IMR-90 (cell line): ENCODE measurements at regions of chr7 and their contacts with region 1.

Region 1: DNA sequence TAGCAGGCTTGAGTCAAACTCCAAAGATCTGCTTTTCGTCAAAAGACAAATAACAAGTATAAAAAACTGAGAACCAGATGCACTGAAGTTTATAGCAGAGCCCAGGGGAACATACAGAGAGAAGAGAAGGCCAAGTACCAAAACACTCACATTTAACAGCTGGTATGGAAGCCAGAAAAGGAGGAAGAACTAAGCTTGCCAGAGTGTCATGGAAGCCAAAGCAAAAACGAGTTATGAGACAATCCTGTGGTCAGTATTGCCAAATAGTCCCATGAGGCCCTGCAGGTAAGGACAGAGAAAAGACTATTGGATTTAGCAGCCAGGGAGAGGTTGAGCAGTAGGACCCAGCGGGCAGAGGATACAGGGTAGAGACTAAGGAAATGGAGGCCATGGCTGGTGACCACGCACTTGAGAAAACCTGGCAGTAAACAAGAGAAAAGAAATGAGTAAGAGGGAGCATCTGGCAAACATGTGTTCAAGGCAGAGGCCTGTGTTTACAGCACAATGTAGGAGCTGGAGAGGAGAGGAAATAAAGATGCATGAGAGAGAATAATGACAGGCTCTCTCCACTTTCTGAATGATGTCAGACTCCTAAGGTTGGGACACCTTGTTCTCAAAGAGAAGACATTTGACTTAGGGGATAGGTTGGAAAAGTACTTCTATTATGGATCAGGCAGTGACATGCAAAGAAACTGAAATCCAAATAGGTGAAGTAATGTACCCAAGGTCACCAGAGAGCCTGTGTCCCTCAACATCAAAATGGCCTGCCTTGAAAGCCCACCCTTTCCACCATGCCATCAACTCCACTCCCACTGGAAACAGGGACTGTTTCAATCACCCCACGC is 9.1 kb downstream of the CREB3L2 start:
- DNase-seq: peak; percentile 97
- ATAC-seq: peak; percentile 65
- H3K4me3 ChIP-seq: no peak overlapping the region
- H3K27ac ChIP-seq: peak overlapping the region; percentile 52
- H3K4me1 ChIP-seq: peaks cover 25% of the 10 kb centered on the region
- H3K27me3 ChIP-seq: no peaks in the 10 kb centered on the region
- CTCF ChIP-seq: no peak
- POLR2A ChIP-seq: peak; percentile 21
- RAD21 ChIP-seq: no peak

Region 2: DNA sequence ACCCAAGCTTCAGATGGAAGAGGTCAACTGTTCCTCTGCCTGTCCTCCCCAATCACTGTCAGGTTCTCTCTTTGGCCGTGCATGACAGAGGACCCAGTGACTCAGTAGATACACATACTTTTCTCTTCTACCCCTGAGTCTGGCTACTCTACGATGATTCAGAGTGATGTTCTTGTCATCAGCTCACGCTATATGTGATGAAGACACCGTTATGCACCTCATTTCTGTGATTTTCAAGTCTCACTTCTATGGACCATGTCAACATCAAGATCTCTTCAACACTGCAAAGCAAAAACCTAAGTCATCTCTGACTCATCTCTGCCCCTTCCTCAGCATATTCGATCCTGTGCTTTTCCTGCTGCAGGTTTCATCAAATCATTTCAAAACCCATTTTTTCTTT is 69.4 kb before region 1 on chr7:
- CTCF ChIA-PET with region 1: interaction called, 3 read pairs
- POLR2A ChIA-PET with region 1: no interaction called
- dilution Hi-C with region 1: loop called (anchors 10 kb)
- in situ Hi-C with region 1: no loop called
- intact Hi-C with region 1: no loop called
- DNase-seq: peak; percentile 93
- ATAC-seq: peak; percentile 65
- H3K4me3 ChIP-seq: no peak overlapping the region
- H3K27ac ChIP-seq: no peak overlapping the region
- H3K4me1 ChIP-seq: peaks cover 12% of the 10 kb centered on the region
- H3K27me3 ChIP-seq: no peaks in the 10 kb centered on the region
- CTCF ChIP-seq: no peak
- POLR2A ChIP-seq: no peak
- RAD21 ChIP-seq: peak; percentile 5

Region 3: DNA sequence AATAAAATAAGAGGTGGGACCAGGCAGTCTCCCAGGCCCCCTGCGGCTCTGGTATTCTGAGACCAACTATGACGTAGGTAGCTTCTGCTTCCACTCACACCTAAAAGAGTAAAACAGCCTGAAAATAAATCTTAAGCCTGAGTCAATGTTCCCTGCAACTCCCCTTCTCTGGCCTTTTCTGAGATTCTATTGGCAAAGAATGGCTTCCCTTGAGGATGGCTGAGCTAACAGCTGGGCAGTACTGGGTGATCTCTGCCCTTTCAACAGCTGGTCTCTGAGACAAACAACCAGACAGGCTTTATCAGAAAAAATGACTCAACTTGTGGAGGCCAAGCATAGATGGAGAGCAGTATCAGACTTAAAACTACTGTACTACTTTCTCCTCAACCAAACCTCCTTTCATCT is 49.6 kb before region 1 on chr7:
- CTCF ChIA-PET with region 1: no interaction called
- POLR2A ChIA-PET with region 1: no interaction called
- dilution Hi-C with region 1: no loop called
- in situ Hi-C with region 1: loop called (anchors 5 kb)
- intact Hi-C with region 1: loop called (anchors 5 kb)
- DNase-seq: peak; percentile 98
- ATAC-seq: peak; percentile 80
- H3K4me3 ChIP-seq: no peak overlapping the region
- H3K27ac ChIP-seq: peak overlapping the region; percentile 48; the same call in 1 of the 2 replicates
- H3K4me1 ChIP-seq: peaks cover 29% of the 10 kb centered on the region
- H3K27me3 ChIP-seq: no peaks in the 10 kb centered on the region
- CTCF ChIP-seq: no peak
- POLR2A ChIP-seq: no peak; the same call in 1 of the 2 replicates
- RAD21 ChIP-seq: peak; percentile 9; the same call in 1 of the 2 replicates

Region 4: GRCh38 chr7:137953665-137954470 is 38.9 kb before region 1 on chr7:
- CTCF ChIA-PET with region 1: interaction called, 3 read pairs
- POLR2A ChIA-PET with region 1: no interaction called
- dilution Hi-C with region 1: no loop called
- in situ Hi-C with region 1: no loop called
- intact Hi-C with region 1: loop called (anchors 1 kb)
- DNase-seq: peak; percentile 84
- ATAC-seq: peak; percentile 38
- H3K4me3 ChIP-seq: no peak overlapping the region
- H3K27ac ChIP-seq: no peak overlapping the region
- H3K4me1 ChIP-seq: peaks cover 24% of the 10 kb centered on the region
- H3K27me3 ChIP-seq: no peaks in the 10 kb centered on the region
- CTCF ChIP-seq: no peak
- POLR2A ChIP-seq: peak; percentile 67; the same call in 1 of the 2 replicates
- RAD21 ChIP-seq: no peak

Region 5: DNA sequence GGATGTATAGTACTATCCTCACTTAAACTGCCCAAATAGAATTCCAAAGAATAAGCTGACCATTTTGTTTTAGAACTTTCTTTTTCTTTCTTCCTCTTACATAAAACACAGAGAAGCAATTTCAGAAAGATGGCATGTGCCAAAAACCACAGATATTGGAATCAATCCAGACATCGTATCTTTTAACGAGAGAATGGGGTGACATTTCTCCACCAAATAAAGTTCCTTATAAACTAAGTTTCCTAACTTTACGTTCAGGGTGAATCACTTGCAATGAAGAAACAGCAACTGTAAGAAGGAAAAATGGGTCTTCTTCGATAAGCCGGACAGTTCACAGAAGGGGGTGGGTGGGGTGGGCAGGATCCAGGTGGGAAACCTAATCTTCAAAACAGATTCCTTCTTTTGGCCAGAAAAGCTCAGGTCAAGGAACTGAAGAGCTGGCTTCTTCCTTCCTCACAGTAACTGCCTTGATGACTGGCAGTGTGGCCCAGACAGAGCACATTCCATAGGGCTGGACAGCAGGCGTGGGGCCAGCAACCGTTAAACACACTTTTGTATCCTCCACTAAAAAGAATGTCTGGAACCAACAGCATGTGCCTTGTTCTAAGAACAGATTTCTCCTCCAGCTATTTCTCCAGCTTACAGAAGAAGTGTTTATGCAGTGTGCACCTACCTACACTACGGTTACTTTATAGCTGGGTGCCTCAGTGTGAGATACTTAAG is 22.4 kb before region 1 on chr7:
- CTCF ChIA-PET with region 1: no interaction called
- POLR2A ChIA-PET with region 1: no interaction called
- dilution Hi-C with region 1: no loop called
- in situ Hi-C with region 1: no loop called
- intact Hi-C with region 1: loop called (anchors 1 kb)
- DNase-seq: peak; percentile 85
- ATAC-seq: peak; percentile 80
- H3K4me3 ChIP-seq: no peak overlapping the region
- H3K27ac ChIP-seq: peak overlapping the region; percentile 51
- H3K4me1 ChIP-seq: peaks cover 23% of the 10 kb centered on the region
- H3K27me3 ChIP-seq: no peaks in the 10 kb centered on the region
- CTCF ChIP-seq: no peak
- POLR2A ChIP-seq: no peak
- RAD21 ChIP-seq: peak; percentile 9; the same call in 1 of the 2 replicates

Region 6: GRCh38 chr7:137978464-137979237 is 14.1 kb before region 1 on chr7:
- CTCF ChIA-PET with region 1: interaction called, 3 read pairs
- POLR2A ChIA-PET with region 1: interaction called, 5 read pairs
- dilution Hi-C with region 1: no loop called
- in situ Hi-C with region 1: no loop called
- intact Hi-C with region 1: loop called (anchors 2 kb)
- DNase-seq: peak; percentile 100
- ATAC-seq: peak; percentile 84
- H3K4me3 ChIP-seq: no peak overlapping the region
- H3K27ac ChIP-seq: peak overlapping the region; percentile 75
- H3K4me1 ChIP-seq: peaks cover 50% of the 10 kb centered on the region
- H3K27me3 ChIP-seq: no peaks in the 10 kb centered on the region
- CTCF ChIP-seq: no peak
- POLR2A ChIP-seq: peak; percentile 84
- RAD21 ChIP-seq: peak; percentile 43